A673 (cell line): ENCODE measurements at regions of chr11 and their contacts with region 1.

Region 1: GRCh38 chr11:8006349-8006977 is 19.3 kb downstream of the EIF3F start:
- DNase-seq: peak; percentile 62
- H3K4me3 ChIP-seq: no peak overlapping the region
- H3K27ac ChIP-seq: no peak overlapping the region
- H3K4me1 ChIP-seq: no peaks in the 10 kb centered on the region
- H3K27me3 ChIP-seq: no peaks in the 10 kb centered on the region
- CTCF ChIP-seq: peak; percentile 70

Region 2: DNA sequence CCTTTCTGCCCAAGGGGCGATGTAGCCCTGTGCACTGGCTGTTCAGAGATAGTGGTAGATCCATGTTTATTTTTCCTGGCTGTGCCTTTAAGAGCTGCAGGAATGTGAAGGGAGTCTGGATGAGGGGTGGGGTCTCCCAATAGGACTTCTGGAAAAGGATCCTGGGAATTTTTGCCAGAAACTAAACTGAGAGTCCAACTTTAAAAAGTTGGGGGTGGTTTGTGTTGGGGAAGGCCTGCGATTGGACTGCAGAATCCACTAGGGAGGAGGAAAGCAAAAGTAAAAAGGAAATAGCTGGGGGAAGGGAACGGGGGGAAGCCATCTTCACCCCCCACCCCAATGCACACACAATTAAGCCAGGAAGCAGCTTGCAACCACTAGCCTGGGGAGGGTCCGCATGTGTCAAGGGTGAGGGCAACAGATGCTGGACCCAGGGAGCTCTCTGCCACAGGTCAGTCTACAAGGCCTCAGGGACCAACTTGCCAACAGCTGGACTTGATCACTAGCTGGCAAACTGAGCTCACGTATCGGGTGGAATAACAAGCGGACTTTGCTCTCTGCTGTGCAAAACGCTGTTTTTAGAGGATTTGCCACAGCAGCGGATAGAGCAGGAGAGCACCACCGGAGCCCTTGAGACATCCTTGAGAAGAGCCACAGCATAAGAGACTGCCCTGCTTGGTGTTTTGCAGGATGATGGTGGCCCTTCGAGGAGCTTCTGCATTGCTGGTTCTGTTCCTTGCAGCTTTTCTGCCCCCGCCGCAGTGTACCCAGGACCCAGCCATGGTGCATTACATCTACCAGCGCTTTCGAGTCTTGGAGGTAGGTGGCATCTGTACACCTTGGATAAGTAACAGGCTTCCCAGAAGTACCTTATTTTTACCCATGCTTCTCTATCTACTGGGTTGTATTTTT is 521.0 kb before region 1 on chr11 and contains the start of gene OLFML1:
- CTCF ChIA-PET with region 1: no interaction called
- POLR2A ChIA-PET with region 1: no interaction called
- intact Hi-C with region 1: no loop called
- DNase-seq: no peak
- H3K4me3 ChIP-seq: no peak within 1 kb of the TSS
- H3K27ac ChIP-seq: no peak within 1 kb of the TSS
- H3K4me1 ChIP-seq: no peaks in the 10 kb centered on the region
- H3K27me3 ChIP-seq: no peaks in the 10 kb centered on the region
- CTCF ChIP-seq: no peak
- total RNA-seq, gene OLFML1: not detected in 2 replicates

Region 3: GRCh38 chr11:8090756-8091155 is 84.3 kb after region 1 on chr11:
- CTCF ChIA-PET with region 1: interaction called, 16 read pairs
- POLR2A ChIA-PET with region 1: no interaction called
- intact Hi-C with region 1: no loop called
- DNase-seq: peak; percentile 33
- H3K4me3 ChIP-seq: no peak overlapping the region
- H3K27ac ChIP-seq: no peak overlapping the region
- H3K4me1 ChIP-seq: no peaks in the 10 kb centered on the region
- H3K27me3 ChIP-seq: no peaks in the 10 kb centered on the region
- CTCF ChIP-seq: peak; percentile 59

Region 4: GRCh38 chr11:8886322-8886721 is 879.9 kb after region 1 on chr11:
- CTCF ChIA-PET with region 1: no interaction called
- POLR2A ChIA-PET with region 1: no interaction called
- intact Hi-C with region 1: no loop called
- DNase-seq: no peak
- H3K4me3 ChIP-seq: no peak overlapping the region
- H3K27ac ChIP-seq: no peak overlapping the region
- H3K4me1 ChIP-seq: no peaks in the 10 kb centered on the region
- H3K27me3 ChIP-seq: no peaks in the 10 kb centered on the region
- CTCF ChIP-seq: no peak